ENCODE measurements at regions of chr7 and their contacts with region 1.

Region 1: DNA sequence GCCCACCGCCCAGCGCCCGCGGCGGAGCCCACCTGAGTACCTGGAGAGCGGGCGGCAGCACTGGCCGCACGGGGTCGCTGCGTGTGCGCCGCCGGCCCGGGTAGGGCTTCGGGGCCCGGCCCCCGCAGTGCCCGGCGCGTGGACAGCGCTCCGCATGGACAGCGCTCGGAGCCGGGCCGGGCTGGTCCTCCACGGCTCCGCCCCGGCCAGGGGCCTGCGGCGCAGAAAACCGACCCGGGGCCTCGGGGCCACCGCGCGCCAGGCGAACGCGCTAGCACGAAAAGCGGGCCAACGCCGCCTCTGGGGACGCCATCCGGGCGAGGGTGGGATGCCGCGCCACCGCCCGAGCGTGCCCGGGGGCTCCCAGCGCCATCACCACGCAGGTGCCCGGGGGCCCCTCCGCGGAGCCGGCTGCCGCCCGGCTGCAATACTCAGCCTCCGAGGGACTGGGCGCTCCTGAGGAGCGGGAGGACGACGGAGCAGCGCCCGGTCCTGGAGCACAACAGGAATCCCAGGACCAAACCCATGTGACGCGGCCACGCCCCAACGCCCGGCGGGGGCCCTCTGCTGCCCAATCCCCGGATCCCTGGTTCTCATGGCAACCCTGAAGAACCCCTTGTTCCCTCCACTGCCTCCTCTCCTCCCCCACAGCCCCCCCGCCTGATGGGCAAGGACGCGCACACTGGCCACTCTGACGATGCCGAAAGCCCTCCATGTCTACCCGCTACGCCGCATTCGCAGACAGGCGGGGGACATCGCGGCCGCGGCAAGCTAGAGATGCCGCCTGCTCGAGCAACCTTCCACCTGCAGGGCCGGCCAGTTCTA is at the start of gene GRB10:
- DNase-seq: peak; percentile 60 to 83 (median 68)
- ATAC-seq: peak; percentile 55 to 74 (median 58)
- H3K4me3 ChIP-seq: peak within 1 kb of the TSS; percentile 9 to 48 (median 39)
- H3K27ac ChIP-seq: peak within 1 kb of the TSS; percentile 39 to 58 (median 43)
- H3K4me1 ChIP-seq: peaks cover 24 to 66% (median 31%) of the 10 kb centered on the region in 3 donors
- H3K27me3 ChIP-seq: no peaks in the 10 kb centered on the region
- CTCF ChIP-seq: no peak
- total RNA-seq, gene GRB10: 96.5 to 199 (median 155) TPM

Region 2: GRCh38 chr7:50711257-50712175 is 71.1 kb before region 1 on chr7:
- intact Hi-C with region 1: loop called in 1 of 3 experiments (anchors 10 kb)
- DNase-seq: no peak
- ATAC-seq: peak in 2 of 4 donors; percentile 6 to 8
- H3K4me3 ChIP-seq: no peak overlapping the region
- H3K27ac ChIP-seq: peak overlapping the region in 2 of 4 donors; percentile 33 to 36
- H3K4me1 ChIP-seq: peaks cover 24 to 70% (median 48%) of the 10 kb centered on the region in 3 donors
- H3K27me3 ChIP-seq: no peaks in the 10 kb centered on the region
- CTCF ChIP-seq: no peak

Measured in pancreas (tissue), 10 donors.